Activated naive CD4-positive, alpha-beta T cell treated with anti-CD3 and anti-CD28 coated beads, Interleukin-2, amount 10 ng/mL, durations not matched to agents 7 days and 5 days (primary cell): ENCODE measurements at regions of chr3 and their contacts with region 1.

Region 1: GRCh38 chr3:71510506-71510905 is 73.0 kb downstream of the FOXP1 start:
- DNase-seq: no peak
- H3K4me3 Mint-ChIP-seq: no peak overlapping the region
- H3K27ac Mint-ChIP-seq: no peak overlapping the region
- H3K4me1 Mint-ChIP-seq: peaks cover 17% of the 10 kb centered on the region
- H3K27me3 Mint-ChIP-seq: peaks cover 5% of the 10 kb centered on the region

Region 2: GRCh38 chr3:71423151-71423906 is 87.2 kb before region 1 on chr3:
- CTCF ChIA-PET with region 1: no interaction called
- DNase-seq: no peak
- H3K4me3 Mint-ChIP-seq: no peak overlapping the region
- H3K27ac Mint-ChIP-seq: peak overlapping the region; percentile 96
- H3K4me1 Mint-ChIP-seq: peaks cover 83% of the 10 kb centered on the region
- H3K27me3 Mint-ChIP-seq: no peaks in the 10 kb centered on the region

Region 3: GRCh38 chr3:71495708-71496472 is 14.6 kb before region 1 on chr3:
- CTCF ChIA-PET with region 1: interaction called, 12 read pairs
- DNase-seq: peak; percentile 48
- H3K4me3 Mint-ChIP-seq: peak overlapping the region; percentile 37
- H3K27ac Mint-ChIP-seq: peak overlapping the region; percentile 68
- H3K4me1 Mint-ChIP-seq: peaks cover 69% of the 10 kb centered on the region
- H3K27me3 Mint-ChIP-seq: no peaks in the 10 kb centered on the region

Region 4: GRCh38 chr3:71616571-71617101 is 106.1 kb after region 1 on chr3:
- CTCF ChIA-PET with region 1: no interaction called
- DNase-seq: peak; percentile 22
- H3K4me3 Mint-ChIP-seq: no peak overlapping the region
- H3K27ac Mint-ChIP-seq: peak overlapping the region; percentile 76
- H3K4me1 Mint-ChIP-seq: peaks cover 14% of the 10 kb centered on the region
- H3K27me3 Mint-ChIP-seq: no peaks in the 10 kb centered on the region